PC-3 (cell line): ENCODE measurements at regions of chr1 and their contacts with region 1.

Region 1: DNA sequence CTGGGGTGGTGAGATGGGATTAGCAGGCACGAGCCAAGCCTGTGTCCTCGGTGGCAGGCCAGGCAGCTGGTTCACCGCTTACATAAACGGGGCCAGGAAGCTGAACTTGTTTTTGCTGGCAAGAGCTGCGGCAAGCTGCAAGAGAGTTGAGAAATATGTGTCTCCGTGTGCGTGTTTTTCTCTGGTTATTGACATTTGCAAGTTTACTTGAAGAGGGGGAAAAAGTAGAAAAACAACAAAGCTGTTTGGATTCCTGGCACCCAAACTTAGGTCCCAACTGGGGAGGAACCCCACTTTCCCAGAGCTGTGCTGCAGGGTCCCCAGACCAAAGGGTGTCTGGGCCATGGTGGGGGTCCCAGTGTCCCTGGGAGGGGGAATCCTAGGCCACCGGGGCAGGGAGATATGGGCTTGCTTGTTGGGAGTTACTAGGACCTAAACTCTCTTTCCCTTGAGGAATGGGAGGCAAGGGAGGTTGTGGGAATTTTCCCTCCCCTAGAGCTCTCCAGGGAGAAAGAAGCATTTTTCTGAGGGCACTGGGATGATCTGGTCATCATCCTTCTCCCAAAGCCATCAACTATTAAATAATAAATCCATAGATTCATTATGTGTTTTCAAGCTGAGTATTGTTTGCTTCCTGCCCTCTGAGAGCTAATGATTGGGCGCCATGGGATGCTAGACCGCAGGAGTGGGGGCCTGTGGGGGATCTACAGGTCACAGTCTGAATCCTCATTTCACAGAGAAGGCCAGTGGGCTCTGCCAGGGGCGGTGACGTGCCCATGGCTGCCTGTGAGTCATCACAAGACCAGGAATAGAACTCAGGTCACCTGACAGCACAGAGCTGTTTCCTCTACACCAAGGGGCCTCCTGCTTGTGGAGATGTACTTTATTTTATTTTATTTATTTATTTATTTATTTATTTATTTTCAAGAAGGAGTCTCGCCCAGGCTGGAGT is 14.8 kb downstream of the IL6R start:
- DNase-seq: peak; percentile 91
- ATAC-seq: peak; percentile 33
- H3K4me3 ChIP-seq: peak overlapping the region; percentile 41; the same call in 1 of the 2 replicates
- H3K27ac ChIP-seq: peak overlapping the region; percentile 90
- H3K4me1 ChIP-seq: peaks cover 61% of the 10 kb centered on the region
- H3K27me3 ChIP-seq: no peaks in the 10 kb centered on the region
- CTCF ChIP-seq: no peak

Region 2: DNA sequence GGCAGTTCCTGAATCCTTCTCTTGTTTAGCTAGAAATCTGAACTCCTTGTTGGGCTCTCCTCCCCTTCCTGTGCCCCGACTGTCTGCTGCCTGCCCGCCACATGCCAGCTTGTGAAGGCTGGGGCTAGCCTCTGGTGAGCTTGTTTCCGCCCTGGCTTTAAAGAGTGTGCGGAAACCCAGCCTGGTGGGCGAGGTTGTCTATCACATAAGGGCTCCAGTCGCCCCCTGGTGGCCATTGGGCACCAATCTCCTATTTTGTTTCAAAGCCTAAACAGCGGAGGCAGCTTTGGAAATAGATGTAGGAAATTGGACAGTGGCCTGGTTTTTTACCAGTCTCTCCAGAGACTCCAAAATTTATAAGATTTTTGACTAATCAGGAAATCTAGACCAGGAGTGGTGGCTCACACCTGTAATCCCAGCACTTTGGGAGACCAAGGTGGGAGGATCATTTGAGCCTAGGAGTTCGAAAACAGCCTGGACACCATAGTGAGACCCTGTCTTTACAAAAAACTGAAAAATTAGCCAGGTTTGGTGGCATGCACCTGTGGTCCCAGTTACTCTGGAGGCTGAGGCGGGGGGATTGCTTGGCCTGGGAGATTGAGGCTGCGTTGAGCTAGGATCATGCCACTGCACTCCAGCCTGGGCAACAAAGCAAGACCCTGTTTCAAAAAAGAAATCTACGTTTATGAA is 84.7 kb before region 1 on chr1:
- CTCF ChIA-PET with region 1: no interaction called
- POLR2A ChIA-PET with region 1: no interaction called
- intact Hi-C with region 1: no loop called
- DNase-seq: peak; percentile 86
- ATAC-seq: peak; percentile 91
- H3K4me3 ChIP-seq: no peak overlapping the region
- H3K27ac ChIP-seq: no peak overlapping the region
- H3K4me1 ChIP-seq: 0 out of 2 replicates have a peak, but pooled peaks cover 3% of the 10 kb centered on the region
- H3K27me3 ChIP-seq: no peaks in the 10 kb centered on the region
- CTCF ChIP-seq: peak; percentile 97

Region 3: GRCh38 chr1:154431586-154432373 is 11.9 kb after region 1 on chr1:
- CTCF ChIA-PET with region 1: interaction called, 5 read pairs
- POLR2A ChIA-PET with region 1: no interaction called
- intact Hi-C with region 1: loop called (anchors 1 kb)
- DNase-seq: peak; percentile 87
- ATAC-seq: peak; percentile 74
- H3K4me3 ChIP-seq: no peak overlapping the region
- H3K27ac ChIP-seq: peak overlapping the region; percentile 91
- H3K4me1 ChIP-seq: peaks cover 34% of the 10 kb centered on the region
- H3K27me3 ChIP-seq: no peaks in the 10 kb centered on the region
- CTCF ChIP-seq: no peak